Tibial artery (tissue), 4 donors: ENCODE measurements at regions of chr3 and their contacts with region 1.

Region 1: GRCh38 chr3:96852856-96853255 is 38.5 kb downstream of the EPHA6 start:
- DNase-seq: no peak
- H3K4me3 ChIP-seq: no peak overlapping the region
- H3K27ac ChIP-seq: no peak overlapping the region
- H3K4me1 ChIP-seq: no peaks in the 10 kb centered on the region
- H3K27me3 ChIP-seq: no peaks in the 10 kb centered on the region
- CTCF ChIP-seq: no peak

Region 2: GRCh38 chr3:96977671-96978070 is 124.8 kb after region 1 on chr3:
- intact Hi-C with region 1: no loop called
- DNase-seq: no peak
- H3K4me3 ChIP-seq: no peak overlapping the region
- H3K27ac ChIP-seq: no peak overlapping the region
- H3K4me1 ChIP-seq: no peaks in the 10 kb centered on the region
- H3K27me3 ChIP-seq: no peaks in the 10 kb centered on the region
- CTCF ChIP-seq: no peak

Region 3: GRCh38 chr3:97705764-97706163 is 852.9 kb after region 1 on chr3:
- intact Hi-C with region 1: loop called (anchors 5 kb)
- DNase-seq: no peak
- H3K4me3 ChIP-seq: no peak overlapping the region
- H3K27ac ChIP-seq: no peak overlapping the region
- H3K4me1 ChIP-seq: no peaks in the 10 kb centered on the region
- H3K27me3 ChIP-seq: no peaks in the 10 kb centered on the region
- CTCF ChIP-seq: no peak